Endothelial cell of umbilical vein (primary cell): ENCODE measurements at regions of chr5 and their contacts with region 1.

Region 1: GRCh38 chr5:104312485-104312884 is 749.9 kb upstream of the NUDT12 start:
- DNase-seq: no peak
- H3K4me3 ChIP-seq: no peak overlapping the region
- H3K27ac ChIP-seq: no peak overlapping the region
- H3K4me1 ChIP-seq: no peaks in the 10 kb centered on the region
- H3K27me3 ChIP-seq: no peaks in the 10 kb centered on the region
- CTCF ChIP-seq: no peak
- POLR2A ChIP-seq: no peak

Region 2: GRCh38 chr5:104186100-104186499 is 126.4 kb before region 1 on chr5:
- CTCF ChIA-PET with region 1: no interaction called
- POLR2A ChIA-PET with region 1: no interaction called
- dilution Hi-C with region 1: no loop called
- intact Hi-C with region 1: no loop called
- DNase-seq: no peak
- H3K4me3 ChIP-seq: no peak overlapping the region
- H3K27ac ChIP-seq: no peak overlapping the region
- H3K4me1 ChIP-seq: peaks cover 17% of the 10 kb centered on the region
- H3K27me3 ChIP-seq: no peaks in the 10 kb centered on the region
- CTCF ChIP-seq: no peak
- POLR2A ChIP-seq: no peak

Region 3: DNA sequence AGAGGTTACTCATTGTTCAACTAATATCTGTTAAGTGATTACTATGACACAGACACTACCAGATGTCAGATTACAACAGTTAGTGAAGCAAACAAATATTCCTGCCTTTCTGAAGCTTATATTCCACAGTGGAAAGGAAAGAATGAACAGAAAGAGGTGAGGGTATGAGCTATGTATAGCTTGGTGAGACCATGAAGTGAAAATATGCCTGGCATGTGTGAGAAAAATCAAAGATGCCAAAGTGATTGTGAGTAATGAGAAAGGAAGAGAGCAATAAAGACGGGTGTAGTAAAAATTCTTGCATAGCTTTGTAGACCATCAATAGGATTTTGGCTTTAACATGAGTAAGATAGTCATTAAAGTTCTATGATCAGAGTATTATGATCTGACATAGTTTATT is 15.4 kb before region 1 on chr5:
- CTCF ChIA-PET with region 1: interaction called, 15 read pairs
- POLR2A ChIA-PET with region 1: interaction called, 3 read pairs
- dilution Hi-C with region 1: no loop called
- intact Hi-C with region 1: no loop called
- DNase-seq: peak; percentile 5
- H3K4me3 ChIP-seq: no peak overlapping the region
- H3K27ac ChIP-seq: no peak overlapping the region
- H3K4me1 ChIP-seq: peaks cover 11% of the 10 kb centered on the region
- H3K27me3 ChIP-seq: no peaks in the 10 kb centered on the region
- CTCF ChIP-seq: no peak
- POLR2A ChIP-seq: no peak

Region 4: GRCh38 chr5:104533509-104533908 is 221.0 kb after region 1 on chr5:
- CTCF ChIA-PET with region 1: no interaction called
- POLR2A ChIA-PET with region 1: no interaction called
- dilution Hi-C with region 1: no loop called
- intact Hi-C with region 1: no loop called
- DNase-seq: no peak
- H3K4me3 ChIP-seq: no peak overlapping the region
- H3K27ac ChIP-seq: no peak overlapping the region
- H3K4me1 ChIP-seq: no peaks in the 10 kb centered on the region
- H3K27me3 ChIP-seq: no peaks in the 10 kb centered on the region
- CTCF ChIP-seq: no peak
- POLR2A ChIP-seq: no peak